Caco-2 (cell line): ENCODE measurements at regions of chr2 and their contacts with region 1.

Region 1: DNA sequence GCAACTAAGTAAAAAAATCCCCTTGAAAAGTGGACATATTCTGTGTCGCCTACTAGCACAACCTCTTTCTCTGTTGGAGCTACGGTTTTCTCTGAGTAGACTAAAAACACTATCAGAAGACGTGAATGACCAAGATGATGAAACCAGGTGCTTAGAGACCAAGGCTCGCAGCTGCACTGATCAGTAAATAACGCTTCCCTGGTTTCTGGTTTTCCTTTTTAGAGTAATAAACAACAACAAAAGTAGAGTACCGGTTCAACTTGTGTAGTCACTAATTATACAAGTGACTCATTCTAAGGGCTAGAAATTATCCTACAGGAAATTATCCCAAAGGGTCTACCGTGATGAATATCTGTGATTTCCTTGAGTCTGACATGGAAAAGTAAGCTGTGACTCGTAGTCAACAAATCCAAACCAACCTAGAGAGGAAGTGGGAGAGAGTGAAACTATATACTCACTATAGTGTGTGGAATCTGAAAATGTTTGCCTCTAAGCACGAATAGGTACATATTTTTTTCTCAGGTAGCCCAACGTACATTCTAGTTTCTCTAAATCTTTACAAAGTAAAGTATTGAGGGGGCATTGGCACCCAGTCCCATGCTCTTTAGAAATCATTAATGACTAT is 17.8 kb downstream of the RASGRP3 start:
- DNase-seq: no peak
- H3K4me3 ChIP-seq: no peak overlapping the region
- H3K4me3 Mint-ChIP-seq: no peak overlapping the region
- H3K27ac Mint-ChIP-seq: peak overlapping the region; percentile 17
- H3K4me1 ChIP-seq: peaks cover 28% of the 10 kb centered on the region
- H3K4me1 Mint-ChIP-seq: peaks cover 20% of the 10 kb centered on the region
- H3K27me3 ChIP-seq: no peaks in the 10 kb centered on the region
- H3K27me3 Mint-ChIP-seq: no peaks in the 10 kb centered on the region
- CTCF ChIP-seq: no peak

Region 2: GRCh38 chr2:32189011-32189410 is 1305.3 kb before region 1 on chr2:
- CTCF ChIA-PET with region 1: no interaction called
- POLR2A ChIA-PET with region 1: no interaction called
- intact Hi-C with region 1: no loop called
- DNase-seq: no peak
- H3K4me3 ChIP-seq: no peak overlapping the region
- H3K4me3 Mint-ChIP-seq: no peak overlapping the region
- H3K27ac Mint-ChIP-seq: no peak overlapping the region
- H3K4me1 ChIP-seq: no peaks in the 10 kb centered on the region
- H3K4me1 Mint-ChIP-seq: no peaks in the 10 kb centered on the region
- H3K27me3 ChIP-seq: no peaks in the 10 kb centered on the region
- H3K27me3 Mint-ChIP-seq: no peaks in the 10 kb centered on the region
- CTCF ChIP-seq: no peak

Region 3: GRCh38 chr2:33484042-33484621 is 10.1 kb before region 1 on chr2:
- CTCF ChIA-PET with region 1: no interaction called
- POLR2A ChIA-PET with region 1: no interaction called
- intact Hi-C with region 1: loop called (anchors 1 kb)
- DNase-seq: no peak
- H3K4me3 ChIP-seq: no peak overlapping the region
- H3K4me3 Mint-ChIP-seq: peak overlapping the region; percentile 54
- H3K27ac Mint-ChIP-seq: peak overlapping the region; percentile 72
- H3K4me1 ChIP-seq: peaks cover 54% of the 10 kb centered on the region
- H3K4me1 Mint-ChIP-seq: peaks cover 22% of the 10 kb centered on the region
- H3K27me3 ChIP-seq: no peaks in the 10 kb centered on the region
- H3K27me3 Mint-ChIP-seq: no peaks in the 10 kb centered on the region
- CTCF ChIP-seq: no peak

Region 4: DNA sequence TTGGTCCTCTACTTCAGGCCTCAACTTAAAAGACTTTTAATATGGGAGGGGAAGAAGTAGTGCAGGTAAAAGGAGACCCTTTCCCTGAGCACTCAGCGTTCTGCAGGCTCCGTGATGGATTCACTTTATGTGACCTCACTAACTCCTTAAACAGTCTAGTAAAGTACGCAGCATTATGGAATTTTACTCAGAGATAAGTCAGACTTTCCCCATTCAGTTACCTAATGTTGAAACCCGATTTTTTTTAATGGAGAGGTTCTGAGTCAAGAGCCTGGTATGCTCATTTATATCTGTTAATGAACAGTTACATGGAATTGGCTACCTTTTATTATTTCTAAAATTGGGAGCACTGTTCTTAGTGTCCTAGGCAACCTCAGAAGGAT is 16.3 kb after region 1 on chr2:
- CTCF ChIA-PET with region 1: no interaction called
- POLR2A ChIA-PET with region 1: no interaction called
- intact Hi-C with region 1: loop called (anchors 2 kb)
- DNase-seq: no peak
- H3K4me3 ChIP-seq: no peak overlapping the region
- H3K4me3 Mint-ChIP-seq: no peak overlapping the region
- H3K27ac Mint-ChIP-seq: no peak overlapping the region
- H3K4me1 ChIP-seq: peaks cover 7% of the 10 kb centered on the region; the same call in 1 of the 2 replicates
- H3K4me1 Mint-ChIP-seq: no peaks in the 10 kb centered on the region
- H3K27me3 ChIP-seq: no peaks in the 10 kb centered on the region
- H3K27me3 Mint-ChIP-seq: no peaks in the 10 kb centered on the region
- CTCF ChIP-seq: no peak

Region 5: GRCh38 chr2:33891616-33892015 is 397.3 kb after region 1 on chr2:
- CTCF ChIA-PET with region 1: no interaction called
- POLR2A ChIA-PET with region 1: no interaction called
- intact Hi-C with region 1: no loop called
- DNase-seq: no peak
- H3K4me3 ChIP-seq: no peak overlapping the region
- H3K4me3 Mint-ChIP-seq: no peak overlapping the region
- H3K27ac Mint-ChIP-seq: no peak overlapping the region
- H3K4me1 ChIP-seq: no peaks in the 10 kb centered on the region
- H3K4me1 Mint-ChIP-seq: no peaks in the 10 kb centered on the region
- H3K27me3 ChIP-seq: no peaks in the 10 kb centered on the region
- H3K27me3 Mint-ChIP-seq: peaks cover 2% of the 10 kb centered on the region
- CTCF ChIP-seq: no peak